ENCODE measurements at regions of chr7 and their contacts with region 1.

Region 1: GRCh38 chr7:157339777-157340677 is 3.2 kb downstream of the DNAJB6 start:
- DNase-seq: peak; percentile 79
- H3K4me3 Mint-ChIP-seq: peak overlapping the region; percentile 96
- H3K27ac Mint-ChIP-seq: peak overlapping the region; percentile 48
- H3K4me1 Mint-ChIP-seq: peaks cover 54% of the 10 kb centered on the region
- H3K27me3 Mint-ChIP-seq: no peaks in the 10 kb centered on the region

Region 2: DNA sequence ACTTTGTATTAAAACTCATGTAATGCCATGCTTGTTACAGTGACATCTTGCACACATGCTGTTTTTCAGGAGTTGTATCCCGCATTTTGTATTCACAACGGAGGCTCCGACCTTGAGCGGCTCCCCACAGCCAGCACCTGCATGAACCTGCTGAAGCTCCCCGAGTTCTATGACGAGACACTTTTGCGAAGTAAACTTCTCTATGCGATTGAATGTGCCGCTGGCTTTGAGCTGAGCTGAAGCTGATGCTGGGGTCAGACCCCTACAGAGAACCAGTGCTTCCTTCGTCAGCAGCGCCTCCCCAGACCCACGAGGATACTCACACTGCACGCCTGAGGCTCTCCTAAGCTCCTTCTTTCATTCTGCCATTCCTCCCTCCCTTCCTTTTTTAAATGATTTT is 72.5 kb before region 1 on chr7:
- CTCF ChIA-PET with region 1: no interaction called
- POLR2A ChIA-PET with region 1: no interaction called
- DNase-seq: no peak
- H3K4me3 Mint-ChIP-seq: no peak overlapping the region
- H3K27ac Mint-ChIP-seq: no peak overlapping the region
- H3K4me1 Mint-ChIP-seq: peaks cover 6% of the 10 kb centered on the region
- H3K27me3 Mint-ChIP-seq: no peaks in the 10 kb centered on the region

Region 3: GRCh38 chr7:157323419-157323818 is 16.6 kb before region 1 on chr7:
- CTCF ChIA-PET with region 1: interaction called, 21 read pairs
- POLR2A ChIA-PET with region 1: no interaction called
- DNase-seq: no peak
- H3K4me3 Mint-ChIP-seq: no peak overlapping the region
- H3K27ac Mint-ChIP-seq: no peak overlapping the region
- H3K4me1 Mint-ChIP-seq: peaks cover 10% of the 10 kb centered on the region
- H3K27me3 Mint-ChIP-seq: peaks cover 2% of the 10 kb centered on the region

Region 4: DNA sequence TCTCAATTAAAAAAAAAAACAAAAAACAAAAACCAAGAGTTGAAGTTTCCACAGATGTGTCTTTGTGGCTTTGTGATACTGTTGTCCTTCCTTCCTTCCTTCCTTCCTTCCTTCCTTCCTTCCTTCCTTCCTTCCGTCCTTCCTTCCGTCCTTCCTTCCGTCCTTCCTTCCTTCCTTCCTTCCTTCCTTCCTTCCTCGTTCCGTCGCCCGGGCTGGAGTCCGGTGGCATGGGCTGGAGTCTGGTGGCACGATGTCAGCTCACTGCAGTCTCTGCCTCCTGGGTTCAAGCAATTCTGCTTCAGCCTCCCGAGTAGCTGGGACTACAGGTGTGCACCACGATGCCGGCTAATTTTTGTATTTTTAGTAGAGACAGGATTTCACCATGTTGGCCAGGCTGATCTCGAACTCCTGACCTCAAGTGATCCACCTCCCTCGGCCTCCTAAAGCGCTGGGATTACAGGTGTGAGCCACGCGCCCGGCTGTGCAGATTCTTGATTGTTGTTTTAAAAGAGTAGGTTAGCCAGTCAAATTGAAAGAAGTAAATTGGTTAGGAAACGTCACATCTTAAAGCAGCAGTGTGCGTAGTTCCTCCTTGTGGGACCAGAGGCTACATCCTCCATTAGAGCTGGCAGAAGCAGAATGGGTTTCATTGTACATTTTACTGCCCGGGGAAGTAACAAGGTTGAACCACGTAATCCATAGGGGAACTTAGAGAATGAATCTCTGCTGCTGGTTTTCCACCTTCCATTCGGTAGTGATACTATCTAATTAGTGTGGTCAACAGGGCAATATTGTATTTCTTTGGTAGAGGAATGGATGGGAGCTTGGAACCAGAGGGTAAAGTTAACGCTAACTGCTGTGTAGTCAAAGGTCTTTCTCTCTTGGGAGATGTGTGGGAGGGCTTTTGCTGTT is 17.4 kb after region 1 on chr7:
- CTCF ChIA-PET with region 1: interaction called, 11 read pairs
- POLR2A ChIA-PET with region 1: no interaction called
- DNase-seq: no peak
- H3K4me3 Mint-ChIP-seq: no peak overlapping the region
- H3K27ac Mint-ChIP-seq: peak overlapping the region; percentile 44
- H3K4me1 Mint-ChIP-seq: peaks cover 49% of the 10 kb centered on the region
- H3K27me3 Mint-ChIP-seq: no peaks in the 10 kb centered on the region

Region 5: DNA sequence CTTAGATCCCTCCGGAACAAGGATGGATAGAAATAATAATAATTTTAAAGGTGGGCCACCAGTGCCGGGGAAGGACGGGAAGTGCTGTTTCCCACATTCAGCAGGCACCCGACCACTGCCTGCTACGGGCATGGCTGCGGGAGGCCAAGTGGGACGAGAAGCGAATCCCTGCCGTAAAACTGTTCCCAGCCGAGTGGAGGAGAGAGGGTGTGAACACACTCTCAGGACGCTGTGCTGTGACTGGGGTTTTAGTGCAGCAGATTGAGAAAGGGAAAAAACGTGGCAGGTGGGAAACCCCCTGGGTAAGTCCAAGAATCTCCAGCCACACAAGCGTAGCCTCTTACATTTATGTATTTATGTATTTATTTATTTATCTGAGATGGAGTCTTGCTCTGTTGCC is 155.6 kb after region 1 on chr7:
- CTCF ChIA-PET with region 1: no interaction called
- POLR2A ChIA-PET with region 1: no interaction called
- DNase-seq: no peak
- H3K4me3 Mint-ChIP-seq: no peak overlapping the region
- H3K27ac Mint-ChIP-seq: no peak overlapping the region
- H3K4me1 Mint-ChIP-seq: peaks cover 31% of the 10 kb centered on the region
- H3K27me3 Mint-ChIP-seq: peaks cover 26% of the 10 kb centered on the region

Measured in activated CD4-positive, alpha-beta T cell treated with anti-CD3 and anti-CD28 coated beads, Interleukin-2, amount 10 ng/mL, durations not matched to agents 7 days and 5 days (primary cell).